PC-3 (cell line): ENCODE measurements at regions of chr2 and their contacts with region 1.

Region 1: GRCh38 chr2:82993637-82994036 is 1465.4 kb downstream of the SUCLG1 start:
- DNase-seq: peak; percentile 96
- ATAC-seq: peak; percentile 94
- H3K4me3 ChIP-seq: peak overlapping the region; percentile 48
- H3K27ac ChIP-seq: peak overlapping the region; percentile 98
- H3K4me1 ChIP-seq: peaks cover 39% of the 10 kb centered on the region
- H3K27me3 ChIP-seq: no peaks in the 10 kb centered on the region
- CTCF ChIP-seq: no peak

Region 2: DNA sequence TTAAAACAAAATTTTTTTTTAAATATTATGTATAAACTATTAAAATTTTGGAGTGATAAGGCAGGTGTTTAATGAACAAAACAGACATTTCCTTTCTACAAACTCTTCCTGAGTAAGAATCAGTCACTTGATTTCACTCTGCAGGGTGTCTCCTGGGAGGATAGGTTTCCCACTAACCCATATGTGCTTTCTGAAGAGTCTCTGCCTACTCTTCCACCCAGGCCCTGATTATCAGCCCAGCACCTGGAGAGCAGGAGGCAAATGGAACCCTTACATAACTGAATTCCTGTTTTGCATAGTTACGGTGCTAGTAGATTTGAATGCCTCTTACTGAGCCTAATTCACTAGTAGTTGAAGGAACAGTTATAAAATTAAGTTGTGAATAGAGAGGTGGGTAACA is 253.1 kb before region 1 on chr2:
- CTCF ChIA-PET with region 1: no interaction called
- POLR2A ChIA-PET with region 1: no interaction called
- intact Hi-C with region 1: loop called (anchors 10 kb)
- DNase-seq: no peak
- ATAC-seq: no peak
- H3K4me3 ChIP-seq: no peak overlapping the region
- H3K27ac ChIP-seq: no peak overlapping the region
- H3K4me1 ChIP-seq: peaks cover 3% of the 10 kb centered on the region
- H3K27me3 ChIP-seq: no peaks in the 10 kb centered on the region
- CTCF ChIP-seq: no peak

Region 3: DNA sequence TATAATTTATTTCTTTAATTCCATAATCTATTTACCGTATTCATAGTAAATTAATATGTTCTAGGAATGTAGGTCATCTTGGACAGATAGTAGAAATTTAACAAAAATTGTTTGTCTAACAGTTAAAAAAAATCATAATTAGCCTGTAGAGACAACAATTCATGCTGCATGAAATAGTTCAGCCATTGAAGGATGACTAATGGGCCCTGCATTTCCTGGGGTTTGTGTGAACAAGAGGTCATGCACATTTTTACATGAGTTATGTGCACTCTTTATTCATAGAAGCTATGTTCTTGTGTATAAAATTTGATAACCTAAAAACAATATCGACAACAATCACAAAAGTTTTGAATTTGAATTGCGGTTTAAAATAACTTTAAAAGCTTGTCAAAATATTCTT is 198.2 kb before region 1 on chr2:
- CTCF ChIA-PET with region 1: no interaction called
- POLR2A ChIA-PET with region 1: no interaction called
- intact Hi-C with region 1: loop called (anchors 1 kb)
- DNase-seq: peak; percentile 81
- ATAC-seq: peak; percentile 82
- H3K4me3 ChIP-seq: peak overlapping the region; percentile 43; the same call in 1 of the 2 replicates
- H3K27ac ChIP-seq: peak overlapping the region; percentile 90
- H3K4me1 ChIP-seq: peaks cover 43% of the 10 kb centered on the region
- H3K27me3 ChIP-seq: no peaks in the 10 kb centered on the region
- CTCF ChIP-seq: no peak

Region 4: DNA sequence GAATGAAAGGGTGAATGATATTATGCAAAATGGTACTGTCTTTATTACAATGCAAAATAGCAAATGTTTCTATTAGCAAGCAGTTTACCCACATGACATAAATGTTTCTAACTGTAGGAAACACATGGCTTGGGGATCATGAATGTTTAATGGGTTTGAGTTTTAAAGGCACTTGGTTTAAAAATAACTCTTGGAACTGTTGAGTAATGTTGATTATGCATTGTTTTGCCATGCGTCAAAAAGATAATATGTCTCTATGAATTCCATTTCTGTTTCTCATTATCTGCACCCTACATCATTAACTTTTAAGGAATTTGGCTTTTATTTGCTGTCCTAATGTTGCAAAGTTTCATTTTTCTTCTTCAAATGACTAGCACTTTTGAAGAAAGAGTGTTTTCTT is 110.0 kb after region 1 on chr2:
- CTCF ChIA-PET with region 1: no interaction called
- POLR2A ChIA-PET with region 1: no interaction called
- intact Hi-C with region 1: loop called (anchors 1 kb)
- DNase-seq: peak; percentile 84
- ATAC-seq: peak; percentile 77
- H3K4me3 ChIP-seq: 0 out of 2 replicates have a peak overlapping the region, but pooled peaks have one; percentile 17
- H3K27ac ChIP-seq: peak overlapping the region; percentile 33
- H3K4me1 ChIP-seq: peaks cover 18% of the 10 kb centered on the region
- H3K27me3 ChIP-seq: no peaks in the 10 kb centered on the region
- CTCF ChIP-seq: no peak

Region 5: DNA sequence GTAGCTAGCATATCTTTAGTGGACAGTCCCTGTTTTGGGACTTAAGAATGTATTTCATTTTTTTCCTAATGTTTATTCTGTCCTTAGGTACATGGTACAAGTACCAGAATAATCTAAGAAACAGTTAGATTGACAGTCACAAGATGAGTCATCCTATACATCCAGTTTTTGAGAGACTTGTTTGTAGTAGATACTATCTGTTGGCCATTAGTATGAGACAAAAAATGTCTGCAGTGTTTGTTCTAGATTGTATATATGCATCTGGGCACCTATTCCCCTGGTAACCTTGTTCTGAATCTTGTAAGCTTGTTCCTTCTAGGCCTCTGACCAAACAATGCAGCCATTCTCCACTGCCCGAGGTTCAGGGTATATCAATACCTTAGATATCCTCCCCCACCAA is 122.0 kb after region 1 on chr2:
- CTCF ChIA-PET with region 1: no interaction called
- POLR2A ChIA-PET with region 1: no interaction called
- intact Hi-C with region 1: loop called (anchors 5 kb)
- DNase-seq: peak; percentile 86
- ATAC-seq: peak; percentile 92
- H3K4me3 ChIP-seq: no peak overlapping the region
- H3K27ac ChIP-seq: peak overlapping the region; percentile 74
- H3K4me1 ChIP-seq: peaks cover 33% of the 10 kb centered on the region
- H3K27me3 ChIP-seq: no peaks in the 10 kb centered on the region
- CTCF ChIP-seq: no peak